Posterior cingulate gyrus (tissue), 11 donors: ENCODE measurements at regions of chr5 and their contacts with region 1.

Region 1: GRCh38 chr5:79514391-79515105 is 614 bp upstream of the HOMER1 start:
- DNase-seq: peak; percentile 79 to 99 (median 90)

Region 2: DNA sequence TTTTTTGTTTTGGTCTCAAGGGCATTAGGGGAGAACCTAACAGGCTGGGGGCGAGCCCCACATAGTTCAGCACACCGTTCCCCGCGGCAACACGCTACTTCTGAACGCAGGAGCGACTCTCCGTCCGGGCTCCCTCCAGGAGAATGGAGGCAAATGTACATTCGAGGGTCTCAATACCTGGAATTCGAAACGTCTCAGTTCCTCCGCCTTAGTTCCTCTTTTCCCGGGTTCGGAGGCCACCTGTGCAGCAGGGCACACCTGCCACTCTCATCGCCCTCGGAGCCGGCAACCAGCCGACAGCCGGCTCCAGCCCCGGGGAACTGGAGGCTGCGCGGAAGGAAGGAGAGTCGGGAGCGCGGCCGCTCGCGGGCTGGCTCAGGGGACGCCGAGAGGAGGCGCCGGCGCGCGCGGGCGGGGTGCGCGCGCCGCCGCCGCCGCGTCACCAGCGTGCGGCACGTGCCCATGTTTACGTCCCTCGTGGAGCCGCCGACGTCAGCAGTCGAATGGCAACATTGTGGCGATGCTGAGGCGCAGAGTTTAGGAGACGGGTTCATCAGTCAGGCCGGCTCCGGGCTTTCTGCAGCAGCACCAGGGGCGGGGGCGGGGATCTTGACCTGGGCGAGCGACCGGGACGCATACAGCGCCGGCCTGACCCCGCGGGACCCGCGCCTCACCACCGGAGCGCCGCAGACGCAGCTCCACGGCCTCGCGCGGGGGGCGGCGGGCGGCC is 278.7 kb before region 1 on chr5 and contains the start of gene JMY:
- intact Hi-C with region 1: loop called (anchors 2 kb)
- DNase-seq: peak; percentile 77 to 96 (median 87)

Region 3: GRCh38 chr5:79612667-79613198 is 98.2 kb after region 1 on chr5:
- intact Hi-C with region 1: loop called (anchors 5 kb)
- DNase-seq: peak in 1 of 10 donors; percentile 32